WTC11 (cell line): ENCODE measurements at regions of chr9 and their contacts with region 1.

Region 1: DNA sequence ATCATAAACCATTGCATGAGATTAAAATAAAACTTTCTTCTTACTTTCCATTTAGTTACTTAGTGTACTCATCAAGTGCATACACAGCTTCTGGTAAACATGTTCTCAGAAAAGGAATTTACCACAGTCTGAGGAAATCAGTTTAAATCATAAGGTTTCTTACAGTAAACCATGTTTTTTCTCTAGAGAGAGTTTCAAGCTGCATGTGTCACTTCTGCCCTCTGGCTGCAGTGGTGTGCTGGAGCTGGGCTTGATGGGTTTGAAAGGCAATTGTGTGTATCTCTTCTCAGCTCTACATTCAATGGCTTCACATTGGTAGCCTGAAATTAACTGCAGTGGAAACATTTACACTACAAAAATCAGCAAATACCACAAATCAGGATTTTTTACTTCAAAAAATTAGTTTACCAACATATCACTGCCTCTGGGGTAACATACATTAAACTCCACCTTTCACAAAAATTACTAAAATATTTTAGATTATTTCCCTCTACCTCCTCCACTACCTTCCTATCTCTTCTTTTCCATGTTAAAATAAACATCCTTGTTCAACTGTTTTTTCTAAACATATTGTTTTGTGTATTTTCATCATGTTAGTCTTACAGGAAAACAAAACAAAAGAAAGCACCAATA is 414.3 kb downstream of the ANXA1 start:
- DNase-seq: peak; percentile 57
- ATAC-seq: peak; percentile 89
- H3K4me3 Mint-ChIP-seq: no peak overlapping the region
- H3K27ac Mint-ChIP-seq: no peak overlapping the region
- H3K4me1 Mint-ChIP-seq: no peaks in the 10 kb centered on the region
- H3K27me3 Mint-ChIP-seq: no peaks in the 10 kb centered on the region
- CTCF ChIP-seq: no peak

Region 2: DNA sequence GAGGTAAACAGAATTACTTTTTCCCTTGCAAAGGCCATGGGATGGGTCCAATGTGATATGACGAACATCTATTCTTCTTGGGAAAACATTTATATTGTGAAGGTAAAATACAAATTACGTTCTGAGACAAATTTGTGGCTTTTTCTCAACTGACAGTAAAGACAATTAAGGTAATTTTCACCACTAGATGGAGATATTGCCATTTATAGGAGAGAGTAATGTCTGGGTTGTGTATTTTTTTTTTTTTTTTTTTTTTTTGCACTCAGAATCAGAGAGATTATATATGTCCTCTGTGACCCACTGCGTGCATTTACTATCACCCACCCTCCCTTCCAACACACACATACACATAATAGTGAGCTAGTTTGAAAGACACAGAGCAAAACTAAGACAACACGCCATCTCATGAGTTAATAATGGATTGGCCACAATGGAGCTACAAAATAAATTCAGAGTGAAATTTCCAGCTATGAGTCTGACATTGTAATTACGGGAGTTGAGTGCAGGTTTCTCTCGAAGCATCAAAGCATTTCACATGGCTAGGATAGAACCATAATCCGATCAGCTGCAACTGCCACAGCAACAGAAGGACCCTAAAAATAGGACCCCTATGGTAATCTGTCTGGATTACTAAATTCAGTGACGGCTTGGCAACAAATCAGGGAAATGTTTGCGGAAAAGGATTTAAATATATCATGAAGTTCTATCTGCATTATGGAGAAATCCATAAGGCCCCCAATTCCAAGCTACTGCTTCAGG is 365.1 kb before region 1 on chr9:
- CTCF ChIA-PET with region 1: interaction called, 34 read pairs
- POLR2A ChIA-PET with region 1: no interaction called
- DNase-seq: no peak
- ATAC-seq: peak; percentile 62; the same call in 1 of the 2 replicates
- H3K4me3 Mint-ChIP-seq: no peak overlapping the region
- H3K27ac Mint-ChIP-seq: no peak overlapping the region
- H3K4me1 Mint-ChIP-seq: peaks cover 12% of the 10 kb centered on the region
- H3K27me3 Mint-ChIP-seq: no peaks in the 10 kb centered on the region
- CTCF ChIP-seq: peak; percentile 29; the same call in 1 of the 2 replicates

Region 3: DNA sequence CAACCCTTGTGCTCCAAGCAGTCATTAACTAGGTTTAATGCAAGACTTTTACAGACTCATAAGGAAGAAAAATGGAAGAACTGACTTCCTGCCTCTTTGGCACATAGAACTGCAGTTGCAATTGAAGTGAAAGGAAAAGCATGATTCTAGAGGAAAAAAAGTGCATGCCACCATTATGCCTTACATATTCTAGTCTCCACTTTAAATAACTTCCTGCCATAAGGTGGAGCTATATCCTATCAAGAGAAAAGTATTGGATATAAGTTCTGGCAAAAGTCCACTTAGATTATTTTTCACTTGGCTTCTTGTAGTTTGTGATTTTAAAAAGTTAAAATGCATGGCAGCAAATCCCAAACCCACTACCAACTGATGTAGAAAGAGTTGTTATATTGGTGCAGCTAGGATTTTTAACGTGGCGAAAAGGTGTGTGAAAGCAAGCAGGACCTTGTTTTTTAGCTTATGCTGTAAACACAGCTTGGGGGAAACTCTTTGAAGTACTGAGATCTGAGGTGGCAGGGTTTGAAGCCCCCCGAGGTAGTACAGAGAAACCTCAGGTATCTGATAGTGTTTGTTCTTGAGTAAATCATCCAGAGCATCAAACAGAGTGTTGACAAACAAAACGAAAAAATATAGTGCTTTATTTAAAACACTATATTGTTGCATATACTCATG is 296.4 kb before region 1 on chr9:
- CTCF ChIA-PET with region 1: interaction called, 23 read pairs
- POLR2A ChIA-PET with region 1: no interaction called
- DNase-seq: no peak
- ATAC-seq: peak; percentile 68
- H3K4me3 Mint-ChIP-seq: no peak overlapping the region
- H3K27ac Mint-ChIP-seq: peak overlapping the region; percentile 54; the same call in 1 of the 2 replicates
- H3K4me1 Mint-ChIP-seq: peaks cover 11% of the 10 kb centered on the region
- H3K27me3 Mint-ChIP-seq: no peaks in the 10 kb centered on the region; the same call in 1 of the 2 replicates
- CTCF ChIP-seq: peak; percentile 13; the same call in 1 of the 2 replicates

Region 4: DNA sequence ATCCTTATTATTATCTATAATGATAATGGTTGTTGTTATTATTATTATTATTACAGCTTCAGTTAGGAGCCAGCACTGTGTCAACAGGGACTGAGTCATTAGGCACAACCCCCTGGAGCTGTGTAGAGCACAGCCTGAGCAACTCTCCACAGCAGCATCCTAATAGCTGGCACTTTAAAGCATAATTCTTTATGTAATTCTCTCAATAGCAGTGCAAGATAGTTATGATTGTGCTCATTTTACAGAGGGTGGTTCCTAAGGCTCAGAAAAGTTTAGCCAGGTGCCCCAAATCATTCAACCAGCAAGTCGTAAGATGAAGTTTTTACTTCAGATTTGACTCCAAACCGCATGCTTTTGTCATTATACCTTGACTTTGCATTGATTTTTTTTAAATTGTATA is 24.0 kb before region 1 on chr9:
- CTCF ChIA-PET with region 1: no interaction called
- POLR2A ChIA-PET with region 1: no interaction called
- DNase-seq: no peak
- ATAC-seq: peak; percentile 51
- H3K4me3 Mint-ChIP-seq: no peak overlapping the region
- H3K27ac Mint-ChIP-seq: no peak overlapping the region
- H3K4me1 Mint-ChIP-seq: 0 out of 2 replicates have a peak, but pooled peaks cover 3% of the 10 kb centered on the region
- H3K27me3 Mint-ChIP-seq: no peaks in the 10 kb centered on the region
- CTCF ChIP-seq: no peak

Region 5: GRCh38 chr9:73615557-73615956 is 49.6 kb after region 1 on chr9:
- CTCF ChIA-PET with region 1: no interaction called
- POLR2A ChIA-PET with region 1: no interaction called
- DNase-seq: no peak
- ATAC-seq: peak; percentile 86
- H3K4me3 Mint-ChIP-seq: no peak overlapping the region
- H3K27ac Mint-ChIP-seq: peak overlapping the region; percentile 12; the same call in 1 of the 2 replicates
- H3K4me1 Mint-ChIP-seq: peaks cover 30% of the 10 kb centered on the region
- H3K27me3 Mint-ChIP-seq: no peaks in the 10 kb centered on the region
- CTCF ChIP-seq: no peak